A549 (cell line): ENCODE measurements at regions of chr11 and their contacts with region 1.

Region 1: DNA sequence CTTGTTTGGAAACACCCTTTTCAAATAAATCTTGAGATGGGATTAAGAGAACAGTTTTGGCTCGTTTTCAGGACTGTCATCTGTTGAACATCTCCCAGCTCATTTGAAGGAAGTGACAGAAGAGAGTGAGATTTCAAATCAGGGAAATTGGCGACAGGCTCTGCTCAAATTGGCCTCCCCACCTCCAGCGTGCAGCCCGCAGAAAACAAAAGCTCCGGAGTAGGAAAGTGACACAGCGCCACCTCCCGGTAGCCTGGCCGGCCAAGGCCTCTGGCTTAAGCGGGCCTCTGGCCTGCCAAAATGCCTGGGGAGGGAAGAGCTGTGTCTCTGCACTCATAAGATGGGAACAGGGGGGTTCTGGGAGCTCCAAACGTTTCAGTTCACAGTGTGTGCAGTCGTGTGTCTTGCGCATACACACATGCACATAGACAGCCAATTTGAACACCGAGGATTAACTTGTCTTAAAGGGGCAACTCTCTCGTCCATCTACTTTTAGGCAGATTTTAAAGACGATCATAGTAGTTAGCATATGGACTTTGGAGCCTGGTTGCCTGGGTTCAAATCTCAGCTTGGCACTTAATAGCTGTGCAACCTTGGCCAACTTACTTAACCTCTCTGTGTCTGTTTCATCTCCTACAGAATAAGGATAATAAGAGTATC is 132.7 kb upstream of the RCN1 start:
- DNase-seq: peak; percentile 38 to 39
- ATAC-seq: peak; percentile 69 to 93; a peak in 4 of 6 replicates
- H3K4me3 ChIP-seq: no peak overlapping the region
- H3K27ac ChIP-seq: no peak overlapping the region
- H3K4me1 ChIP-seq: no peaks in the 10 kb centered on the region
- CTCF ChIP-seq: peak; percentile 59
- EP300 ChIP-seq: no peak
- POLR2A ChIP-seq: no peak
- RAD21 ChIP-seq: peak; percentile 56 to 71

Region 2: GRCh38 chr11:31558001-31558400 is 400.2 kb before region 1 on chr11:
- CTCF ChIA-PET with region 1: no interaction called
- POLR2A ChIA-PET with region 1: no interaction called
- DNase-seq: no peak
- ATAC-seq: no peak
- H3K4me3 ChIP-seq: no peak overlapping the region
- H3K27ac ChIP-seq: no peak overlapping the region
- H3K4me1 ChIP-seq: 0 out of 3 replicates have a peak, but pooled peaks cover 5% of the 10 kb centered on the region
- CTCF ChIP-seq: no peak
- EP300 ChIP-seq: no peak
- POLR2A ChIP-seq: no peak
- RAD21 ChIP-seq: no peak

Region 3: DNA sequence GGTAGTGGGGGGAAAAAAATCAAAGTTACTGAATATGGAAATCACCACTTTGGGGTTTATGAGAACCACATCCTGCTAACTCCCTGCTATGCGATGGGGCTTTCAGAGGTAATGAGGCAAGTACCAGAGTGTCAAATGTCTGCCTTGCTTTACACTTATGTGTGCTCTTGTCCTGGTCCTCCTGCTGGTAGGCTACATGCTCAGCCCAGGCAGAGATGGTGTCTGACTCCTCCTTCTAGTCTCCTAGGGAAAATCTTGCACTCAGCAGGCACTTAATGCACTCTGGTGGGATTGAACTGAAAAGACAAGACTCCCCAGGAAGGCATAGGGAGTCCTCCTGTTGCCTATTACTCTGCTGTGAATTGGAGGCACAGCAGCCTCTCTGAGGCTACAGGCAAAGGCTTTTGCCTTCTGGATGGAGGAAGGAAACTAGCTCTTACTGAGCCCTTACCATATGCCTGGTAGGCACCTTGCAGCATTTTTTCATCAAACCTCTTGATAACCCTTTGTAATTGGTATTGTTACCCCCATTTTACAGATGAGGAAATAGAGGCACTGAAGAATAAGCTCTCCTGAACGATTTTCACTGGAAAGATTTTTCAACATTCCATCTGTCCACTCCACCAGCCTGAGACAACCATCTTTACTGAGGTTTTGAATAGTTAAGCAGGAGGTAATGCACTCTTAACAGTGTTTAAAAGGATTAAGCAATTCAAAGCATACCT is 15.0 kb before region 1 on chr11:
- CTCF ChIA-PET with region 1: interaction called, 33 read pairs
- POLR2A ChIA-PET with region 1: no interaction called
- DNase-seq: no peak
- ATAC-seq: no peak
- H3K4me3 ChIP-seq: no peak overlapping the region
- H3K27ac ChIP-seq: no peak overlapping the region
- H3K4me1 ChIP-seq: no peaks in the 10 kb centered on the region
- CTCF ChIP-seq: no peak
- EP300 ChIP-seq: no peak
- POLR2A ChIP-seq: no peak
- RAD21 ChIP-seq: no peak

Region 4: GRCh38 chr11:31974366-31975136 is 16.3 kb after region 1 on chr11:
- CTCF ChIA-PET with region 1: interaction called, 14 read pairs
- POLR2A ChIA-PET with region 1: no interaction called
- DNase-seq: peak in 1 of 2 experiments; percentile 48
- ATAC-seq: peak; percentile 68 to 82; a peak in 5 of 6 replicates
- H3K4me3 ChIP-seq: no peak overlapping the region
- H3K27ac ChIP-seq: no peak overlapping the region
- H3K4me1 ChIP-seq: peaks cover 10% of the 10 kb centered on the region; the same call in 2 of the 3 replicates
- CTCF ChIP-seq: no peak
- EP300 ChIP-seq: no peak
- POLR2A ChIP-seq: no peak
- RAD21 ChIP-seq: no peak

Region 5: DNA sequence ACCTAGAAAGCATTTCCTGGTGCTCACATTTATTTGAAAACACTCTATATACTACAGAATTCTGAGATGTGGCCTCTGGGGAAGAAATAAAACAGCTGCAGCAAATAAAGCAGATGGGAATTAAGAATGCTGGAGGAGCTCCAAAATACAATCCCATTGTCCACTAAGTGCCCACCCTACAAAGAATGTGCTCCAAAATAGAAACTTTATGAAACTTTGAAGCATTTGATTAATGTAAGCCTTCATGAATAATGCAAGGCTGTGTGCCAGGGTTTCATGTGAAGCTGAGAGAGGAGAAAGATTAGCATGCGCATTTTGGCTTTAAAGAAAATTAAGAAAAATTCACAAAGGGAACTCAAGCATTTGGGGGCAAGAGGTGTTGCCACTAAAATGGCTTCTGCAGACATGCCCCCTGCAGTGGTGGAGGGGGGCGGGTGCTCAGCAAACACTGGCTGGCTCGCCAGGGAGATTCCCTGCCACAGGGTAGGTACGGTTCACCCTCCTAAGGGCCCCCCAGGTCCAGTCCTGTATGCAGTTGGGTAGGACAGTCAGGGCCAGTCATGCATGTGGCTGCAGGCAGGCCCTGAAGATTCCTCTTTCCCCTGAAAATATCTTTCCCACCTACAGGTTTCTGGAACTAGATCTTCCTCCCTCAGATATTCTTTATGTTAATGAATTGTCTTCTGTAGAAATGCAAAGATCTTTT is 86.1 kb after region 1 on chr11:
- CTCF ChIA-PET with region 1: no interaction called
- POLR2A ChIA-PET with region 1: no interaction called
- DNase-seq: no peak
- ATAC-seq: no peak
- H3K4me3 ChIP-seq: no peak overlapping the region
- H3K27ac ChIP-seq: no peak overlapping the region
- H3K4me1 ChIP-seq: no peaks in the 10 kb centered on the region
- CTCF ChIP-seq: no peak
- EP300 ChIP-seq: no peak
- POLR2A ChIP-seq: no peak
- RAD21 ChIP-seq: no peak